ENCODE measurements at regions of chr1 and their contacts with region 1.

Region 1: GRCh38 chr1:145845514-145846161 is at the start of gene NUDT17:
- DNase-seq: peak; percentile 87
- H3K4me3 Mint-ChIP-seq: no peak within 1 kb of the TSS
- H3K27ac Mint-ChIP-seq: no peak within 1 kb of the TSS
- H3K4me1 Mint-ChIP-seq: peaks cover 10% of the 10 kb centered on the region
- H3K27me3 Mint-ChIP-seq: no peaks in the 10 kb centered on the region
- CTCF ChIP-seq: peak; percentile 92
- total RNA-seq, gene NUDT17: 2.8 and 4.0 TPM in 2 replicates

Region 2: DNA sequence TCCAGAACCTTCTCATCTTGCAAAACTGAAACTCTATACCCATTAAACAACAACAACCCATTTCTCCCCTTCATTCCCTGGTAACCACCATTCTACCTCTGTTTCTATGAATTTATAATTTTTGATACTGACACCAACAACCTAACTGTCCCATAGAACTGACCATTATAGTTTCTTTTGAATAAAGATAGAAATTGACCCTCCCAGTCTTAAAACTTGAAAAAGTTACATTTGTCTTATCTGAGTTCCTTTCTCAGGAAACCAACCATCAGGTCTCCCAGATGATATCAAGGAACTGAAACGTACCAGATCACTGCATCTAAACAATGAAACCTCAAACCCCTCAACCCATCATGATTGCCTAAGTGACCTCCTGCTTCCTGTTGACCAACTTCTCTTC is 48.9 kb before region 1 on chr1:
- CTCF ChIA-PET with region 1: no interaction called
- intact Hi-C with region 1: no loop called
- DNase-seq: no peak
- H3K4me3 Mint-ChIP-seq: no peak overlapping the region
- H3K27ac Mint-ChIP-seq: no peak overlapping the region
- H3K4me1 Mint-ChIP-seq: peaks cover 8% of the 10 kb centered on the region
- H3K27me3 Mint-ChIP-seq: no peaks in the 10 kb centered on the region
- CTCF ChIP-seq: no peak

Region 3: GRCh38 chr1:145906954-145907753 is 61.5 kb after region 1 on chr1:
- CTCF ChIA-PET with region 1: interaction called, 6 read pairs
- intact Hi-C with region 1: loop called (anchors 2 kb)
- DNase-seq: no peak
- H3K4me3 Mint-ChIP-seq: no peak overlapping the region
- H3K27ac Mint-ChIP-seq: no peak overlapping the region
- H3K4me1 Mint-ChIP-seq: no peaks in the 10 kb centered on the region
- H3K27me3 Mint-ChIP-seq: no peaks in the 10 kb centered on the region
- CTCF ChIP-seq: no peak

Region 4: DNA sequence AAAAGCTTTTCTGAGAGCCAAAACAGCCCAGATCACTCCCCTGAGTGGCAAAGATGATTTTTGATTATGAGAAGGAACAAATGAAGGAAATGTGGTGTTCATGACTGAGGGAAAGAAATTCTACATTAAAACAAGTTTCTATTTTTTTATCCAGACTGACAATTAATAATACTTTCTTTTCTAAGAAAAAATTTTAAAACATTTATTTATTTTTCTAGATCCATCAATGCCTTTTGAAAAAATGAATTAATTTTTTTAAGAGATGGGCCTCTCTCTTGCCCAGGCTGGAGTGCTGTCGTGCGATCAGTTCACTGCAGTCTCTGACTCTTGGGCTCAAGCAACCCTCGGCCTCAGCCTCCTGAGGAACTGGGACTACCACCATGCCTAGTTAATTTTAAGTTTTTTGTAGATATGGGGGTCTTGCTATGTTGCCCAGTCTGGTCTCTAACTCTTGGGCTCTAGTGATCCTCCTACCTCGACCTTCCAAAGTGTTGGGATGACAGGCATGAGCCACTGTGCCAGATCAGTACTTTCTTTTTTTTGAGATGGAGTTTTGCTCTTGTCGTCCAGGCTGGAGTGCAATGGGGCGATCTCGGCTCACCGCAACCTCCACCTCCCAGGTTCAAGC is 162.0 kb after region 1 on chr1:
- CTCF ChIA-PET with region 1: interaction called, 4 read pairs
- intact Hi-C with region 1: loop called (anchors 1 kb)
- DNase-seq: no peak
- H3K4me3 Mint-ChIP-seq: no peak overlapping the region
- H3K27ac Mint-ChIP-seq: no peak overlapping the region
- H3K4me1 Mint-ChIP-seq: no peaks in the 10 kb centered on the region
- H3K27me3 Mint-ChIP-seq: no peaks in the 10 kb centered on the region
- CTCF ChIP-seq: no peak